Activated T-helper 1 cell treated with anti-CD3 and anti-CD28 coated beads, Interleukin-12 subunit alpha, Interleukin-12 subunit beta, Interleukin-2, Interleukin-4 antibody, amounts not matched to agents 30 ng/mL and 10 ng/mL and 1 ng/mL, durations not matched to agents 14 hours and 24 hours and 36 hours (primary cell): ENCODE measurements at regions of chr2 and their contacts with region 1.

Region 1: DNA sequence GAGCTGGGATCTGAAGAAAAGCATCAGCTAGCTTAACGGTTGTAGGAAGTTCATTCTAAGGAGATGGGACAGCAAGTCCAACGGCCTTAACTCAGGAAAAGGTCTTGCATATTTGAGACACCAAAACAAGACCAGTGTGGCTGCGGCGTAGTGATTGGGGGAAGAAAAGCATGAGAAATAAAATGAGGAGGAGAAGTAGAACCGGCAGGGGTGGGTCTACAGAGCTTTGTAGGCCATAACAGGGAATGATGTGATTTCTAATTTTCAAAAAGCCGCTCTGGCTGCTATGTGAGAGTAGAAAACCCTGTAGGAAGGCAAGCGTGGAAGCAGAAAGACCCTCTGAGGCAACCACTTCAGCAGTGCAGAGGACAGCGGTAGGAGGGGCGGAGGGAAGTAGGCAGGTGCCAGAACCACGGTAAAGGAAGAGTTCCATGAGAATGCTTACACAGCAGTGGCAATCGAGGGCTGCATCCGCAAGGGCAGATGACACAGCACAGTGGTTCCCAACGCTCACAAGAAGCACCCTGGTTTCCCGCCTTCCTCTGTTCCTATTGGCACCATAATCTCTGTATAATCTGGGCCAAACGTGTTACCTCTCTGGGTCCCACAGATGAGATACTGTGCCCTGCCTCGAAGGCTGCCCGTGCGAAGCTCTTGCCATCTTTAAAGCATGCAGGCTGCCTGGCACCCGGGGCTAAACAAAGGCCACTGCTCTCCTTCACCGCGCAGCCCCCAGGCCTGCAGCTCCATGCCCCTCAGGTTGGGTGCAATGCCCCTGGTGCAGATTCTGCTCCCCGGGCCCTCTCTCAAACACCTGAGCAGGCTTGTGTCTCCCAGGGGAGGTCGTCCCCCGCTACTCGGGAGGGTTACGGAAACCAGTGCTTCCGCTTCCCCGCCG is 791 bp downstream of the ANKRD39 start:
- DNase-seq: no peak
- H3K4me3 Mint-ChIP-seq: peak overlapping the region; percentile 85
- H3K27ac Mint-ChIP-seq: peak overlapping the region; percentile 88
- H3K4me1 Mint-ChIP-seq: peaks cover 26% of the 10 kb centered on the region
- H3K27me3 Mint-ChIP-seq: no peaks in the 10 kb centered on the region

Region 2: GRCh38 chr2:96788442-96789244 is 68.4 kb before region 1 on chr2:
- intact Hi-C with region 1: no loop called
- DNase-seq: no peak
- H3K4me3 Mint-ChIP-seq: no peak overlapping the region
- H3K27ac Mint-ChIP-seq: no peak overlapping the region
- H3K4me1 Mint-ChIP-seq: no peaks in the 10 kb centered on the region
- H3K27me3 Mint-ChIP-seq: no peaks in the 10 kb centered on the region

Region 3: GRCh38 chr2:96816128-96816835 is 40.7 kb before region 1 on chr2 and contains the start of gene CNNM3:
- intact Hi-C with region 1: loop called (anchors 1 kb)
- DNase-seq: peak; percentile 97
- H3K4me3 Mint-ChIP-seq: peak within 1 kb of the TSS; percentile 93
- H3K27ac Mint-ChIP-seq: peak within 1 kb of the TSS; percentile 91
- H3K4me1 Mint-ChIP-seq: peaks cover 54% of the 10 kb centered on the region
- H3K27me3 Mint-ChIP-seq: no peaks in the 10 kb centered on the region
- total RNA-seq, gene CNNM3: 26.1 and 31.4 TPM in 2 replicates

Region 4: DNA sequence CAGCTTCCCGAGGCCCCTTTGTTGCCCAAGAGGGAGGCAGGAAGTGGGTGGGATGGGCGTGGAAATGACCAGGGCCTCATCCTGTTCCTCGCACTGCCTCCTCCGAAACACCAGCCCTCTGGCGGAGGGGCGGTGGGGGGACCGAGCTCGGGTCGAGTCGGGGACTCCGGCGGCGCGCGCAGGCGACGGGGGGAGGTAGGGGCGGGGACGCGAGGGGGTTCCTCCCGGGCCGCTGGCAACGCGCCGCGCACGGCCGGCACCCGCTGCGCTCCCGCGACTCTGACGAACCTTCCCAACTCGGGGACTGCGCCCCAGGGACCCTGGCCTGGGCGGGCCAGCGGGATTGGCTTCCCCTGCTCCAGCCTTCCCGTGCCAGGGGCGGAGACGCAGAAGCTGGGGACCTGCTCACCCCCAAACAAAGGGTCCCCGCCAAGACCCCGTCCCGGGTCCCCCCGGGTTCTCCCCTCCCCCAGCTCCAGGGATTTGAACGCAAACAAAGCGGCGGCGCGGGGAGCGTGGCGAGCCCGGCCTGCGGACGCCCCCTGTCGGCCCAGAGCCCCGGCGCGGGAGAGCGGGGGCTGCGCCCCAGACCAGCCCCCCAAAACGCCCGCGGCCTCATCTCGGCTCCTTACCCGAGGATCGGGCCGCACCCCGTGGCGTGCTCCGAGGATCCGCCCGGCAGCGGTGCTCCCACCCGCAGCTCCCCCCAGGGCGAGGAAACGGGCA is 11.7 kb after region 1 on chr2:
- intact Hi-C with region 1: loop called (anchors 1 kb)
- DNase-seq: peak; percentile 52
- H3K4me3 Mint-ChIP-seq: peak overlapping the region; percentile 83
- H3K27ac Mint-ChIP-seq: peak overlapping the region; percentile 81
- H3K4me1 Mint-ChIP-seq: peaks cover 33% of the 10 kb centered on the region
- H3K27me3 Mint-ChIP-seq: peaks cover 24% of the 10 kb centered on the region

Region 5: GRCh38 chr2:96960153-96960961 is 103.3 kb after region 1 on chr2:
- intact Hi-C with region 1: loop called (anchors 1 kb)
- DNase-seq: peak; percentile 70
- H3K4me3 Mint-ChIP-seq: peak overlapping the region; percentile 47
- H3K27ac Mint-ChIP-seq: peak overlapping the region; percentile 67
- H3K4me1 Mint-ChIP-seq: peaks cover 55% of the 10 kb centered on the region
- H3K27me3 Mint-ChIP-seq: no peaks in the 10 kb centered on the region